Sciatic nerve (tissue), 2 donors: ENCODE measurements at regions of chr4 and their contacts with region 1.

Region 1: DNA sequence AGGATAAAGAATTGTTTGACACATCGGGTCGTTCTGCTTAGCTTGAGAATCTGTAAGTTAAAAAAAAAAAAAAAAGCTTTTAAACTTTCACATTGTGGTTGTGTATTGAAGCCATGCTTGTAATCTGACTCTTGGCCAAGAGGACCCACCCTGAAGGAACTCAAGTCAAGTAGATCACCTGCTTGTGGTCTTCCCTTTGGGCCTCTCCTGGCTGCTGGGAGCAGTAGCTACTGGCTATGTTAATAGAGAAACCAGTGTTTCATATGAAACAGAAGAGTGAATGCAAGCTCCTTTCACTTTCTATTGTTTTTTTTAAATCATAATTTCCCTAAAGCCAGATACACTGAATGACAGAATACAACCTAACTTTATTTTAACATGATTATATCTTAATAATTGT is 402.4 kb upstream of the NDST4 start:
- DNase-seq: no peak
- ATAC-seq: no peak

Region 2: GRCh38 chr4:114558446-114559020 is 957.2 kb before region 1 on chr4:
- intact Hi-C with region 1: no loop called
- DNase-seq: no peak
- ATAC-seq: no peak

Region 3: GRCh38 chr4:114830628-114831027 is 685.1 kb before region 1 on chr4:
- intact Hi-C with region 1: no loop called
- DNase-seq: no peak
- ATAC-seq: no peak

Region 4: GRCh38 chr4:115213716-115214115 is 302.1 kb before region 1 on chr4:
- intact Hi-C with region 1: loop called (anchors 5 kb)
- DNase-seq: no peak
- ATAC-seq: no peak

Region 5: GRCh38 chr4:117084866-117085701 is 1569.3 kb after region 1 on chr4 and contains the start of gene TRAM1L1:
- intact Hi-C with region 1: no loop called
- DNase-seq: peak; percentile 71
- ATAC-seq: peak; percentile 94
- total RNA-seq, gene TRAM1L1: 2.6 TPM